HEK293 (cell line): ENCODE measurements at regions of chr17 and their contacts with region 1.

Region 1: GRCh38 chr17:68600067-68600930 is 868 bp downstream of the FAM20A start:
- H3K4me3 ChIP-seq: peak overlapping the region; percentile 44
- H3K27ac ChIP-seq: peak overlapping the region; percentile 46; the same call in 1 of the 2 replicates
- H3K4me1 ChIP-seq: peaks cover 9% of the 10 kb centered on the region
- CTCF ChIP-seq: peak; percentile 75; the same call in 1 of the 2 replicates

Region 2: GRCh38 chr17:68495081-68495480 is 105.2 kb before region 1 on chr17:
- CTCF ChIA-PET with region 1: no interaction called
- POLR2A ChIA-PET with region 1: no interaction called
- H3K4me3 ChIP-seq: no peak overlapping the region
- H3K27ac ChIP-seq: no peak overlapping the region
- H3K4me1 ChIP-seq: no peaks in the 10 kb centered on the region
- CTCF ChIP-seq: no peak

Region 3: DNA sequence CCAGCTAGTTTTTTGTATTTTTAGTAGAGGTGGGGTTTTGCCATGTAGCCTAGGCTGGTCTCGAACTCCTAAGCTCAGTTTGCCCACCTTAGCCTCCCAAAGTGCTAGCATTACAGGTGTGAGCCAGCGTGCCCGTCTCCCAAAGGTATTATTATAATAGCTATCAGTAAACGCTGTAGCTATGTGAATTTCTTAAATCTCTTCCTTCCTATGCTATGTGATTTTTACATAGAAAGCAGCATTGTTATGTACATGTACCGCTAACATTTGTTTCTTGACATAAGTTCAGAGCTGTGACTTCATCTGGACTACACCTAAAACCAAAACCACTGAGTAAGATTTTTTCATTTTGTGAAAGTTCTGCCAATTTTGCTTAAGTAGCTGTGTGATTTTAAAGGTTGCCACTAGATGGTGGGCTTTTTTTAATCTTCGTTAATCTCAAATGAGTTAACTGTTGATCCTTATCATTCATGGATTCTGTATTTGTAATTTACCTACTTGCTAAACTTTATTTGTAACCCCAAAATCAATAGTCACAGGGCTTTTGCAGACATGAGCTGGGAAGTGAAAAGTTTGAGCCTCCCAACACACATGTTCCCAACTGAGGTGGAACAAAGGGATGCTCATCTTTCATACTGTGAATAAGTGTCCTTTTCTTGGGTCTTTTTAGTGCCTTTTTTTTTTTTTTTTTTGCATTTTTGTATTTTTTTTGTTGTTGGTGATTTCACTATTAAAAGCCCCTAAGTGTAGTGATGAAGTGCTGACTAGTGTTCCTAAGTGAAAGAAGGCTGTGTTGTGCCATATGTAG is 66.2 kb before region 1 on chr17:
- CTCF ChIA-PET with region 1: interaction called, 13 read pairs
- POLR2A ChIA-PET with region 1: no interaction called
- H3K4me3 ChIP-seq: no peak overlapping the region
- H3K27ac ChIP-seq: no peak overlapping the region
- H3K4me1 ChIP-seq: no peaks in the 10 kb centered on the region
- CTCF ChIP-seq: no peak